CD8-positive, alpha-beta T cell (primary cell): ENCODE measurements at regions of chr2 and their contacts with region 1.

Region 1: DNA sequence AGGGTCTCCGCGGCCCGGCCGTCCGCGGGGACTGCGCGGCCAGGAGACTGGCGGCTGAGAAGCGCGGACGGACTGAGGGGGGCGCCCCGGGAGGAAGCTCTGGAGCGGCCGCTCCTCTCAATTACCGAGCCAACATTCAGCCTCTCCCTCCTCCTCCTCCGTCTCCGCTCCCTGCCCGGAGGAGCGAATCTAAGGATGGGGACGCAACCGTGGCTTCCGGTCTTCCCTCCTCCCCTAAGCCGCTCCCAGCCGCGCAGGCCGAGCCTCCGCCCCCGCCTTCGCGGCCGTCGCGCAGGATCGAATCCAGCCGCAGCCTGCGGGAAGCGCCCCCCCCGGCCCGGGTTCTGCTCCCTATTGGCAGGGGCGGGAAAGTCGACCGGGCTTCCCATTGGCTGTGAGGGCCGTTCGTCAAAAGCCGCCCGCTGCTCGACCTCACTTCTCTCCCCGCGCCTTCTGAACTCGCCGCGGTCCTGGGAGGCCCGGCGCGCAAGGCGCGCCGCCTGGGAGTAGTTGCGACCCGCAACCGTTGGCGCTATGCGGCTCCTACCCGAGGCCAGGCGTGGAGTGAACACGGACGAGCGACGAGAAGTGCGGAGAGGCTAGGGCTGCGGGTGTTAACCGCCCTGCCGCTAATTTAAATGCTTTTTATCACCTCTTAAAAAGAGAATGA is at the start of gene HNRNPLL:
- DNase-seq: peak; percentile 79 to 94 (median 91)
- ATAC-seq: peak; percentile 78
- H3K4me3 ChIP-seq: peak within 1 kb of the TSS; percentile 82 to 85
- H3K4me3 Mint-ChIP-seq: peak within 1 kb of the TSS; percentile 95
- H3K27ac ChIP-seq: peak within 1 kb of the TSS; percentile 54 to 64
- H3K27ac Mint-ChIP-seq: peak within 1 kb of the TSS; percentile 91
- H3K4me1 ChIP-seq: peaks cover 23% of the 10 kb centered on the region
- H3K4me1 Mint-ChIP-seq: peaks cover 47% of the 10 kb centered on the region
- H3K27me3 ChIP-seq: no peaks in the 10 kb centered on the region
- H3K27me3 Mint-ChIP-seq: no peaks in the 10 kb centered on the region
- CTCF ChIP-seq: no peak
- total RNA-seq, gene HNRNPLL: 35.0 to 37.6 TPM

Region 2: DNA sequence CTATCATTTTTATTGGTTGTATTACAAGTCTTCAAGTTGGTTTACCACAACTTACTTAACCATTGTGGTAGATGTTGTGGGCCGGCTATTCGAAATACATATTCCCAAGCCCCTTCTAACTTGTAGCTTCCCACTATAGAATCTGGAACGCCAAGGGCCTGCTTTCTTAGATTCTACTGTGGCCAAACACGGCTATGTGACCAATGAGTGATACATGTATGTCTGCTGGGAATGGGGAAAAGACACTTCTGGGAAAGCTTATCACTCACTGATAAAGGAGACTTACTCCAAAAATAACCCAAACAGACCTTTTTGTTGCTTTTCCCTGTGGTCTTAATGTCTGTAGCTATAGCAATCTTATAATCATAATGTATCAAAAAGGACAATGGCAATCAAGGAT is 1661.0 kb before region 1 on chr2:
- CTCF ChIA-PET with region 1: no interaction called
- POLR2A ChIA-PET with region 1: no interaction called
- intact Hi-C with region 1: no loop called
- DNase-seq: no peak
- ATAC-seq: no peak
- H3K4me3 ChIP-seq: no peak overlapping the region
- H3K4me3 Mint-ChIP-seq: no peak overlapping the region
- H3K27ac ChIP-seq: no peak overlapping the region
- H3K27ac Mint-ChIP-seq: no peak overlapping the region
- H3K4me1 ChIP-seq: no peaks in the 10 kb centered on the region
- H3K4me1 Mint-ChIP-seq: peaks cover 2% of the 10 kb centered on the region
- H3K27me3 ChIP-seq: no peaks in the 10 kb centered on the region
- H3K27me3 Mint-ChIP-seq: no peaks in the 10 kb centered on the region
- CTCF ChIP-seq: no peak

Region 3: GRCh38 chr2:38233231-38233983 is 369.5 kb before region 1 on chr2:
- CTCF ChIA-PET with region 1: no interaction called
- POLR2A ChIA-PET with region 1: no interaction called
- intact Hi-C with region 1: no loop called
- DNase-seq: no peak
- ATAC-seq: no peak
- H3K4me3 ChIP-seq: no peak overlapping the region
- H3K4me3 Mint-ChIP-seq: no peak overlapping the region
- H3K27ac ChIP-seq: no peak overlapping the region
- H3K27ac Mint-ChIP-seq: no peak overlapping the region
- H3K4me1 ChIP-seq: no peaks in the 10 kb centered on the region
- H3K4me1 Mint-ChIP-seq: no peaks in the 10 kb centered on the region
- H3K27me3 ChIP-seq: no peaks in the 10 kb centered on the region
- H3K27me3 Mint-ChIP-seq: peaks cover 33% of the 10 kb centered on the region
- CTCF ChIP-seq: no peak

Region 4: DNA sequence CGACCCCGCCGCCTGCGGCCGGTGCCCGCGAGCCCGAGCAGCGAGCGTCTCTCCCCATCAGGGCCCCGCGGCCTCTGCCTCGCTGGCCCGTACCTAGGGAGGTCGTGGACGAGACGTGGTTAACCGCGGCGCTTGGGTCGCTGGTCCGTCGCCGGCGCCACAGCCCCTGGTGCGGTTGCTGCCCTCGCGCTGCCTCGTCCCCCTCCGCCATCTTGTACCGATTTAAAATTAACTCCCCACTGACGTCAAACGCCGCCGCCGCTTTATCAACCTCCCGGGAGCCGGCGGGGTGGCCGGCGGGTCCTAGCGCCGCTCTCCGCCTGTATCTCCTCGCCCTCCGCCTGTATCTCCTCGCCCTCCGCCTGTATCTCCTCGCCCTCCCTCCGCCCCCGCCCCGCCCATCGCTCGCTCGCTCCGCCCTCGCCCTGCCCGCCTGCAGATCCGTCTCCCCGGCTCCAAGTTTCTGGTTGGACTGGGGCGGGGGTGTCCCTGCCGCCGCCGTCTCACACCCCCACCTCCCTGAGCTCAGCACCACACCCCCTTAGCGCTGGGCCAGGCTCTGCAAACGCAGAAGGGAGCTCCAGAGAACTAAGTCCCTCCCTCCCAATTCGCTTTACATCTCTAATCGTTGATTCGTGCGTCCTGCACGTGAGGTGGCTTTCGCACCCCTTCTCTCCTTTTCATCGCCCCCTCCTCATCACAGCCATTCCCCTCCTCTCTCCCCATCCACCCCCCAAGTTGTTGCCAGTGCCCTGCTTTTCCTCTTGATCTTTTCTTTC is 225.6 kb before region 1 on chr2 and contains the start of gene ATL2:
- CTCF ChIA-PET with region 1: interaction called, 3 read pairs
- POLR2A ChIA-PET with region 1: no interaction called
- intact Hi-C with region 1: loop called (anchors 2 kb)
- DNase-seq: peak; percentile 87 to 96 (median 93)
- ATAC-seq: peak; percentile 80
- H3K4me3 ChIP-seq: peak within 1 kb of the TSS; percentile 71 to 93
- H3K4me3 Mint-ChIP-seq: peak within 1 kb of the TSS; percentile 97
- H3K27ac ChIP-seq: peak within 1 kb of the TSS; percentile 84 to 91
- H3K27ac Mint-ChIP-seq: peak within 1 kb of the TSS; percentile 96
- H3K4me1 ChIP-seq: peaks cover 35% of the 10 kb centered on the region
- H3K4me1 Mint-ChIP-seq: peaks cover 69% of the 10 kb centered on the region
- H3K27me3 ChIP-seq: no peaks in the 10 kb centered on the region
- H3K27me3 Mint-ChIP-seq: no peaks in the 10 kb centered on the region
- CTCF ChIP-seq: no peak
- total RNA-seq, gene ATL2: 76.4 to 88.2 TPM

Region 5: DNA sequence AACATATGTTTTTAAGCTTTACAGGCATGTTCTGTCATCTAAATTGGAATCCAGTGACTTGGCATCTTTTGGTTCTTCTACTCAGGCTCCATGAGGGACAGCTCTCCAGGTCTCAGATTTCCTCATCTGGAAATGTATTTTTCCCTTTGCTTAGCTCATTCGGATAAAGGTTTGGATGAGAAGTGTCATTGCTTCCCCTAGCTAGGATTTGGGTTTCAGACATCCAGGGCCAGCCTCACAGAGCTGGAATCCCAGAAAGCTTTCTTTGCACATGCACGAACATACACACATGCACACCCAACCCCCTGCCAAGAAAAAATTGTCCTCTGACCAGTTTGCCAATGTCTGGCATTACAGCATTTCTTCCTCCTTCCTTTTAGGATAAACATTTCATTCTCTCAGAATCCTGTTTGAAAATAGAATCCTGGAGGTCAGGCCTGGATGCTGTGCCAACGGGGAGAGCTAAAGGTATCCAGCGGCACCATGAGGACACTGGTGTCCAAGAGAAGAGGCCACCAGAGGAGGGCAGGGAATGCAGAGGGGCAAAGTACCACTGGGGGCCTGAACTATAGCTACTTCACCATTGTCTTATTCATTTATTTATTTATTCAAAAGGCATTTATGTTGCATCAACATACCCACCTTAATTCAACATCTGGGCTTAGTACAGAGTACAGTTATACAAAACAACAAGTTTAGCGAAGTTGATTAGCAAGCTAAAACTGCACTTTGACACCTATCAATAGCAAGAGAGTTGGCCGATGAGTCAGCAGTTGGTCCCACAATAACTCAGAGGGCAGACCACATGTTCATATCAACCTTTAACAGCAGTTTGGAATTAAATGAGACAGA is 127.9 kb before region 1 on chr2:
- CTCF ChIA-PET with region 1: no interaction called
- POLR2A ChIA-PET with region 1: no interaction called
- intact Hi-C with region 1: no loop called
- DNase-seq: no peak
- ATAC-seq: no peak
- H3K4me3 ChIP-seq: no peak overlapping the region
- H3K4me3 Mint-ChIP-seq: no peak overlapping the region
- H3K27ac ChIP-seq: no peak overlapping the region
- H3K27ac Mint-ChIP-seq: no peak overlapping the region
- H3K4me1 ChIP-seq: no peaks in the 10 kb centered on the region
- H3K4me1 Mint-ChIP-seq: no peaks in the 10 kb centered on the region
- H3K27me3 ChIP-seq: no peaks in the 10 kb centered on the region
- H3K27me3 Mint-ChIP-seq: peaks cover 13% of the 10 kb centered on the region
- CTCF ChIP-seq: no peak

Region 6: DNA sequence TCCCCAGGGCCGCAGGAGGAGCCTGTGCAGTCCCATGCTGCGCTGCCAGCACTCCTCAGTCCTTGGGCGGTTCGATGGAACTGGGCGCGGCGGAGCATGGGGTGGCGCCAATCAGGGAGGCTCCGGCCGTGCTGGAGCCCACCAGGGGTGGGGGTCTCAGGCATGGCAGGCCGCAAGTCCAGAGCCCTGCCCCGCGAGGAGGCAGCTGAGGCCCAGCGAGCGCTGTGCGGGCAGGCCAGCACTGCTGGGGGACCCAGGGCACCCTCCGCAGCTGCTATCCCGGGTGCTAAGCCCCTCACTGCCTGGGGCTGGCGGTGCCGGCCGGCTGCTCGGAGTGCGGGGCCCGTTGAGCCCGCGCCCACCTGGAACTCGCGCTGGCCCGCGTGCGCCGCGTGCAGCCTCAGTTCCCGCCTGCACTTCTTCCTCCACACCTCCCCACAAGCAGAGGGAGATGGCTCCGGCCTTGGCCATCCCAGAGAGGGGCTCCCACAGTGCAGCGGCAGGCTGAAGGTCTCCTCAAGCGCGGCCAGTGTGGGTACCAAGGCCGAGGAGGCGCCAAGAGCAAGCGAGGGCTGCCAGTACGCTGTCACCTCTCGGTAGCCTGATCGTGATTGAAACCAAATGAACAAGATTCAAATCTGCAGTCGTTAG is 40.3 kb after region 1 on chr2:
- CTCF ChIA-PET with region 1: interaction called, 5 read pairs
- POLR2A ChIA-PET with region 1: no interaction called
- intact Hi-C with region 1: loop called in 1 of 2 experiments (anchors 2 kb)
- DNase-seq: no peak
- ATAC-seq: no peak
- H3K4me3 ChIP-seq: no peak overlapping the region
- H3K4me3 Mint-ChIP-seq: peak overlapping the region; percentile 51
- H3K27ac ChIP-seq: no peak overlapping the region
- H3K27ac Mint-ChIP-seq: peak overlapping the region; percentile 85
- H3K4me1 ChIP-seq: no peaks in the 10 kb centered on the region
- H3K4me1 Mint-ChIP-seq: peaks cover 13% of the 10 kb centered on the region
- H3K27me3 ChIP-seq: no peaks in the 10 kb centered on the region
- H3K27me3 Mint-ChIP-seq: no peaks in the 10 kb centered on the region
- CTCF ChIP-seq: no peak

Region 7: GRCh38 chr2:38704664-38705063 is 101.8 kb after region 1 on chr2:
- CTCF ChIA-PET with region 1: interaction called, 10 read pairs
- POLR2A ChIA-PET with region 1: interaction called, 4 read pairs
- intact Hi-C with region 1: no loop called
- DNase-seq: no peak
- ATAC-seq: no peak
- H3K4me3 ChIP-seq: no peak overlapping the region
- H3K4me3 Mint-ChIP-seq: no peak overlapping the region
- H3K27ac ChIP-seq: no peak overlapping the region
- H3K27ac Mint-ChIP-seq: no peak overlapping the region
- H3K4me1 ChIP-seq: peaks cover 13% of the 10 kb centered on the region
- H3K4me1 Mint-ChIP-seq: peaks cover 48% of the 10 kb centered on the region
- H3K27me3 ChIP-seq: no peaks in the 10 kb centered on the region
- H3K27me3 Mint-ChIP-seq: no peaks in the 10 kb centered on the region
- CTCF ChIP-seq: no peak

Region 8: DNA sequence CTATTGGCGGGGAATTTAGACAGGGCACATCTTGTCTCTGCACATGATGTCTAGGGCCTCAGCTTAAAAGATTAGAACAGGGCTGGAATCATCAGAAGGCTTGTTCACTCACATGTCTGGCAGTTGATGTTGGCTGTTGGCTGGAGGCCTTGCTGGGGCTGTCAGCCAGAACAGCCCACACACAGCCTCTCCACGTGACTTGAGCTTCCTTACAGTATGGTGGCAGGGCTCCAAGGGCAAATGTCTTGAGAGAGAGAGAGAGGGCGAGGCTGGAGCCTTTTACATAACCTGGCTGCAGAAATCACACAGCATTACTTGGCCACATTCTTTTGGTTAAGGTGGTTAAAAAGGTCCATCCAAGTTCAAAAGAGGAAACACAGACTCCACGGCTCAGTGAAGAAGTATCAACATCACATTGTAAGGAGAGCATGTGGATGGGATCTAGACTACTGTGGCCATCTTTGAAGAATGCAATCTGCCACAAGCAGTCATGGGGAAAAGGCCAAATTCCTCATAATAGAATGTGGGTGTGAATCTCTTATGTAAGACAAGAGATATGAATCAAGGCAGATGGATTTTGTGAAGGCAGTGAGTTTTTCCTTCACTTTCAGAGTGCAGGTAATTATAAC is 117.9 kb after region 1 on chr2:
- CTCF ChIA-PET with region 1: interaction called, 20 read pairs
- POLR2A ChIA-PET with region 1: interaction called, 10 read pairs
- intact Hi-C with region 1: loop called in 1 of 2 experiments (anchors 1 kb)
- DNase-seq: no peak
- ATAC-seq: no peak
- H3K4me3 ChIP-seq: no peak overlapping the region
- H3K4me3 Mint-ChIP-seq: no peak overlapping the region
- H3K27ac ChIP-seq: no peak overlapping the region
- H3K27ac Mint-ChIP-seq: peak overlapping the region; percentile 25
- H3K4me1 ChIP-seq: peaks cover 13% of the 10 kb centered on the region
- H3K4me1 Mint-ChIP-seq: peaks cover 30% of the 10 kb centered on the region
- H3K27me3 ChIP-seq: no peaks in the 10 kb centered on the region
- H3K27me3 Mint-ChIP-seq: no peaks in the 10 kb centered on the region
- CTCF ChIP-seq: no peak

Region 9: DNA sequence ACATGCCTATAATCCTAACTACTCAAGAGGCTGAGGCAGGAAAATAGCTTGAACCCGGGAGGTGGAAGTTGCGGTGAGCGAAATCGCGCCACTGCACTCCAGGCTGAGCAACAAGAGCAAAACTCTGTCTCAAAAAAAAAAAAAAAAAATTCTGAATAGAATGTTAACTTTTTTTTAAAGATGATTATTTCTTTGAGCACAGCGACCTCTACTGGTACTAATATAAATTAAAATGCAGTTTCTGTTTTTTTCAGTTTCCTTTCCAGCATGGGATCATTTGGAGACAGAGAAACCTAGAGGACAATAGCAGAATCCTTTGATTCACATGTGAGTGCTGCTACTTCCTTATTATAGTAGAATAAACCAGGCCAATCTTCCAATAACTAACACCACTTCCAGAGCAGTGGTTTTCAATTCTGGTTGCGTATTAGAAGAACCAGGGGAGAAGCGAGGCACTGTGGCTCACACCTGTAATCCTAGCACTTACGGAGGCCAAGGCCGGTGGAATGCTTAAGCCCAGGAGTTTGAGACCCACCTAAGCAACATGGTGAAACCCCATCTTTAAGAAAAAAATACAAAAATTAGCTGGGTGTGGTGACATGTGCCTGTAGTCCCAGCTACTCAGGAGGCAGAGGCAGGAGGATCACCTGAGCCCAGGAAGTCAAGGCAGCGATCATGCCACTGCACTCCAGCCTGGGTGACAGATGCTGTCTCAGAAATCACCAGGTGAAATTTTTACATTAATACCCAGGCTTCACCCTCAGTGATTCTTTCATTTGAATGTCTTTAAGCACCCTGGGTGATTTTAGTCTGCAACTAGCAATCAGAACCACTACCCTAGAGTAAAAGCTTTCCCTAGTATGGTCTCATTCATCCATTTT is 138.2 kb after region 1 on chr2:
- CTCF ChIA-PET with region 1: interaction called, 12 read pairs
- POLR2A ChIA-PET with region 1: interaction called, 3 read pairs
- intact Hi-C with region 1: no loop called
- DNase-seq: peak in 3 of 9 experiments; percentile 48 to 73 (median 62)
- ATAC-seq: peak; percentile 22
- H3K4me3 ChIP-seq: no peak overlapping the region
- H3K4me3 Mint-ChIP-seq: no peak overlapping the region
- H3K27ac ChIP-seq: peak overlapping the region in 1 of 2 experiments; percentile 21
- H3K27ac Mint-ChIP-seq: peak overlapping the region; percentile 69
- H3K4me1 ChIP-seq: peaks cover 19% of the 10 kb centered on the region
- H3K4me1 Mint-ChIP-seq: peaks cover 43% of the 10 kb centered on the region
- H3K27me3 ChIP-seq: no peaks in the 10 kb centered on the region
- H3K27me3 Mint-ChIP-seq: no peaks in the 10 kb centered on the region
- CTCF ChIP-seq: peak; percentile 72

Region 10: DNA sequence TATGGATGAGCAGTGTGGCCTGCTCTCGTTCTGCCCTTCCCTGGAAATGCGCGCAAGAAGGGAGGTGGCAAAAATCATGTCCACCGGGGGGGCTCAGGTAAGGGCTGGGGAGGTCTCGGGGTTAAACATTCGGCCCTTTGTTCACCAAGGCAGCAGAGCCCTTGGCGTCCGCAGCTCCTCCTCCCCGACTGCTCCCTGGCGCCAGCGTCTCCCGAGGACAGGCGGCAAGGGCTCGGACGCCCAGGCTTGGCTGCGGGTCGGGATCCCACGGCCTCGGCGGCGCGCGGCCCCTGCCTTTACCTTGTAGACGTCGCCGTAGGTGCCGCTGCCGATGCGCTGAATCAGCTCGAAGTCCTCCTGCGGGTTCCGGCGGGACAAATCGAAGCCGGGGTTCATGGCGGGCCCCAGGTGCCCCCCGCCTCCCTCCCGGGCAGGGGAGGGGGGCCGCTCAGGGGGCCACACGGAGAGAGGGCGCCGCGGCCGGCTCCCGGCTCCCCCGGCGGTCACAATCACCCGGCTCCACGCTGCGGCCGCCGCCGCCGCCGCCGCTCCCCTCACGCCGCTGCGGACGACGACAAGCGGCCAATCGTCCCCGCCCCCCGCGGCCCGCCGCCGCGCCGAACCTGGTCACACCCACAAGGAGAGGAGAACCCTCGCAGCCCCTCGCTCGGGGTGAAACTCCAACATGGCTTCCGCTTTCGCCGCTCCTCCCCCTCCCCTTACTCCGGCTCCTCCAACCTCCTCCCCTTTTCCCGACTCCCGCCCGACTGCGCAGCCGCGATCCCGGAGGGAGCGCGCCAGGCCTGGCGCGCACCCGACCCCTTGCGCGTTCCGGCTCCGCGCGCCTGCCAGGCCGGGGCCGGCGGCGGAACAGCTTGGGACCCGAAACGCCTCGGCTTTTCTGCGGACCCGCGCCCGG is 834.0 kb after region 1 on chr2 and contains the start of gene MAP4K3:
- CTCF ChIA-PET with region 1: no interaction called
- POLR2A ChIA-PET with region 1: no interaction called
- intact Hi-C with region 1: loop called in 1 of 2 experiments (anchors 5 kb)
- DNase-seq: peak; percentile 30 to 85 (median 68)
- ATAC-seq: peak; percentile 61
- H3K4me3 ChIP-seq: peak within 1 kb of the TSS; percentile 74 to 82
- H3K4me3 Mint-ChIP-seq: peak within 1 kb of the TSS; percentile 90
- H3K27ac ChIP-seq: peak within 1 kb of the TSS; percentile 32 to 52
- H3K27ac Mint-ChIP-seq: peak within 1 kb of the TSS; percentile 84
- H3K4me1 ChIP-seq: peaks cover 22% of the 10 kb centered on the region
- H3K4me1 Mint-ChIP-seq: peaks cover 49% of the 10 kb centered on the region
- H3K27me3 ChIP-seq: no peaks in the 10 kb centered on the region
- H3K27me3 Mint-ChIP-seq: no peaks in the 10 kb centered on the region
- CTCF ChIP-seq: no peak
- total RNA-seq, gene MAP4K3: 15.0 to 19.8 TPM

Region 11: DNA sequence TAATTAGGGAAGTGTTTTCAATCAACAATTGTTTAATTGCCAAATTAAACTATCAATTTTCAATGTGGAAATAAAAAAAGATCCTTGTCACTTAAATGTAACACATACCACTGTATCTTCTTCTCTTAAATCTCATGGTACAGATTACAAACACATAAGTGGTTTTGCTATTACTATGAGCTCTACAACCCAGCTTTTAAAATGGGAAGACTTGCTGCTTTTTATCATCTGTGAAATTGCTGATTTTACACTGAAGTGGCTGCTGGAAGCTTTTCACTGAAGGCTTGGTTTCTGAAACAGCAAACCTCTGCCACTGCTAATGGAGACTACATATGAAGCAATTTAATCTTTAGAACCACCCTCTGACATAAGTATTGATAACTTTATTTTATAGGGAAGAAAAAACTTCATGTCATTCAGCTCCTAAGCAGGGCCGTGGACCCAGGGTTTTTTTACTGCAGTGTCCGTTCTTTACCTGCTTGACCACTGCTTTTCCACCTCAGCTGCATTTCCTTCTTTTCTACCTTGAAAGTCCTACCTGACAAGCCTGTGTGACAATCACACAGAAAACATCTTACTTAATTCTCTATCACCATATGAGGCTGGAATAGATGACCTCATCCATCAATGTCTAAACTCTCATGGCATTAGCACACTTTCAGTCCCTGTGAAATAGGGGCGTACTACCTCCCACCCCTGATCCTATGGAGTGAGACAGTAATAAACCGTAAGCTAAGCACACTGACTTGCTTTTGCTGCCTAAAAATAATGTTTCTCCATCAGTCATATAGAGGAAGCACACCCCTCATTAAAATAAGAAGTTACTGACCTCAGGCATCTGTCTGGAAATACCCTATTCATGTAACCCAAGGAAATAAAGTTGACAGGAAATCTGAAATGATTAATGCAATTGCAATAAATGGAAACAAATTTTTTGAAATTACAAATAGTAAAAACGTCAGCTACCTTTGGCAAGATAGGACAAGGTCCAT is 1868.3 kb after region 1 on chr2:
- CTCF ChIA-PET with region 1: no interaction called
- POLR2A ChIA-PET with region 1: no interaction called
- intact Hi-C with region 1: no loop called
- DNase-seq: no peak
- ATAC-seq: no peak
- H3K4me3 ChIP-seq: no peak overlapping the region
- H3K4me3 Mint-ChIP-seq: no peak overlapping the region
- H3K27ac ChIP-seq: no peak overlapping the region
- H3K27ac Mint-ChIP-seq: no peak overlapping the region
- H3K4me1 ChIP-seq: no peaks in the 10 kb centered on the region
- H3K4me1 Mint-ChIP-seq: no peaks in the 10 kb centered on the region
- H3K27me3 ChIP-seq: no peaks in the 10 kb centered on the region
- H3K27me3 Mint-ChIP-seq: no peaks in the 10 kb centered on the region
- CTCF ChIP-seq: no peak